ENCODE measurements at regions of chr14 and their contacts with region 1.

Region 1: GRCh38 chr14:77124345-77125280 is 17.0 kb downstream of the ZDHHC22 start:
- DNase-seq: no peak
- ATAC-seq: peak; percentile 50
- H3K4me3 ChIP-seq: peak overlapping the region; percentile 48; the same call in 1 of the 2 replicates
- H3K27ac ChIP-seq: peak overlapping the region; percentile 4; the same call in 1 of the 2 replicates
- H3K4me1 ChIP-seq: peaks cover 49% of the 10 kb centered on the region
- H3K27me3 ChIP-seq: peaks cover 6 to 7% of the 10 kb centered on the region in 2 experiments; a peak in 2 of 4 replicates
- CTCF ChIP-seq: peak; percentile 33 to 61 (median 52); a peak in 4 of 6 replicates
- EP300 ChIP-seq: no peak
- POLR2A ChIP-seq: peak; percentile 45; the same call in 1 of the 2 replicates
- RAD21 ChIP-seq: peak; percentile 59; the same call in 1 of the 2 replicates

Region 2: DNA sequence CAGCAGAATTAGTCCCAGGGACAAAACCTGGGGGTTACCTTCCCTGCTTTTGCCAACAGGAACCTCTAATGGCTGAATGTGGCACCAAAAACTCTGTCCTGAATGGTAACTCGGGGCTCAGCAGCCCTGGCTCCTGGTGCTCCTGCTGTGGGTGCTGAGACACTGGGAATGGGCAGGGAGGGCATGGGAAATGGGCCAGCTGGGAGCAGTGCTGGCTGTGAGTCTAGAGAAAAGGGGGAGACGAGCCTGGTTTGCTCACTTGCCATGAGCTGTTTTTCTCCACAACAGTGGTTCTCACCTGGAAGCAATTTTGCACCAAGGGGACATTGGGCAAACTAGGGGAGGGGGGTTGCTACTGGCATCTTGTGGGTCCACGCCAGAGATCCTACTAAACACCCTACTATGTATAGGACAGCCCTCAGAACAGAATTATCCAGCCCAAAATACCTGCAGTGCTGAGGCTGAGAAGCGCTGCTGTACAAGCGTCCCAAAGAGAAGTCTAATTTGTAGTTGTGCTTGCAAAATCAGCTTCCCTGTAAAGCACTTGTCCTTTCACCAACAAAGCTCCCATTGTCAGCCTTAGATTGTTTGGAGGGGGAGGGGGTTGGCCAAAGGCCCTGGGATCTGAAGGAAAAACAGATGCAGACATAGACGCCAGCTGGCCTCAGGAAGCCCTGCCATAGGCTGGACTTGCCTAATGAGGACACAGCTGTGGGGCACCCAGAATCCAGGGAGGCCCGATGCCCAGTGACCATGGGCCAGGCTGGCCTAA is 294.8 kb before region 1 on chr14:
- CTCF ChIA-PET with region 1: no interaction called
- POLR2A ChIA-PET with region 1: no interaction called
- RAD21 ChIA-PET with region 1: no interaction called
- SMC1A ChIA-PET with region 1: no interaction called
- in situ Hi-C with region 1: no loop called
- intact Hi-C with region 1: no loop called
- DNase-seq: no peak
- ATAC-seq: no peak
- H3K4me3 ChIP-seq: no peak overlapping the region
- H3K27ac ChIP-seq: no peak overlapping the region
- H3K4me1 ChIP-seq: no peaks in the 10 kb centered on the region
- H3K27me3 ChIP-seq: peaks cover 0 to 3% of the 10 kb centered on the region in 2 experiments; a peak in 1 of 4 replicates
- CTCF ChIP-seq: no peak
- EP300 ChIP-seq: no peak
- POLR2A ChIP-seq: no peak
- RAD21 ChIP-seq: no peak

Region 3: DNA sequence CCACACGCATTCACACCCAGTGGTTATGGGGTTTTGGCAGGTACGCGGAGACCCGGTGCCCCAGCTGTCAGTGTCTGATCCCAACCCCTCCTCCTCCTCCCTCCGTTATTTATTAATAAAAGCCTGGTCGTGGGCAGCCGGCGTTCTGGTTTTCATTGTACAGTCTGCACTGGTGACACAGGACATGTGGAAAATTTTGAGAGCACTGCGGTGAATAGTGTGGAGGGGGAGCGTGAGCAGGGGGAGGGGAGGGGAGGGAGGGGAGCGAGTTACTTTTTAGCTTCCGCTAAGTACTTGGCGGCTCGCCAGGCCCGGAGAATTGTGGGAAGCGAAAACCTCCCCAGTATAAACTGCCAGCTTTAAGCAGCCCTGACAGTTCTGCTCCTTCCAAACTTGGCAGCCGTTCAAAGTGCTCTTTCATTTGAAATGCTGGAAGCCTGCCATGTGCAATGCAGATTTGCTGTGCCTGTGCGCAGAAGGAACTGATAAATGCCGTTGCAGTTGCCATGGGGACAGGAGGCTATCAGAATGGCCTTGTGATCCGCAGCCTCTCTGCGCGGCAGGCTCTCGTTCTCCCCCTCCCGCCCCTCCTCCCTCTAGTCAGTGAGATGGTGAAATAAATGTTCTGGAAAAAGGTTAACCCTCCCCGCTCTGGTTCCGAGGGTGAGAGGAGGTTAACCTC is 84.4 kb before region 1 on chr14:
- CTCF ChIA-PET with region 1: interaction called, 6 read pairs
- POLR2A ChIA-PET with region 1: interaction called, 4 read pairs
- RAD21 ChIA-PET with region 1: interaction called, 10 read pairs
- SMC1A ChIA-PET with region 1: interaction called, 4 read pairs
- in situ Hi-C with region 1: no loop called
- intact Hi-C with region 1: no loop called
- DNase-seq: peak; percentile 99
- ATAC-seq: peak; percentile 75
- H3K4me3 ChIP-seq: peak overlapping the region; percentile 50
- H3K27ac ChIP-seq: peak overlapping the region; percentile 93
- H3K4me1 ChIP-seq: peaks cover 87% of the 10 kb centered on the region
- H3K27me3 ChIP-seq: no peaks in the 10 kb centered on the region
- CTCF ChIP-seq: no peak
- EP300 ChIP-seq: peak; percentile 42 to 61
- POLR2A ChIP-seq: peak; percentile 55; the same call in 1 of the 2 replicates
- RAD21 ChIP-seq: no peak

Region 4: DNA sequence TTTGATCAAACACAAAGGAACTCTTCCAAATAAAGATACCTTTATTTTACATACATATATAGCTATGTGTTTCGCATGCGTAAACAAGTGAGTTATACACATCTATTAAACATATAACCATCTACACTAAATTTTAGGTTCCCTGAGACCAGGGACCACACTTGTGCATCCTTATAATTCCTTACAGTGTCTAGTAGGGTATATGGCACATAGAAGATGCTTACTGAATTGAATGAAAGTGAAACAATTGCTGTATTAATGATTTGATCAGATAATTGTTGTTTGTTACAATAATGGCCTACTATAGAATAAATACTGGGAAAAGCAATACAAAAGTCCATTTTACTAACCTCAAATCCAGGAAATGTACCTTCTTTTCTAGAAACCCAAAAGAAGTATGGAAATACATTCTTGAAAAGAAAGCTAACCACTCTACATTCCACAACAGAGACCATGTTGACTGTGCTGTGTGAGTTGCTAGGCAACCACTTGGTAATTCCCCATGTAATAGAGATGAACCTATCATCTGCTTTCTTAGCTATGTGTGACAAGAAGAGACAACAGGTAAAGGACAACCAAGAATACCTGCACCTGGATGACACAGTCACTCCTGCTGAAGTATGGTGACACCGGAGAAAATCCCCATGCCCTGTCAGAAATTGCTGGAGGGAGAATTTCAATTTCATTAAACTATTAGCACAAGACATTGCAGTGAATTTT is 38.4 kb before region 1 on chr14:
- CTCF ChIA-PET with region 1: interaction called, 445 read pairs
- POLR2A ChIA-PET with region 1: interaction called, 5 read pairs
- RAD21 ChIA-PET with region 1: interaction called, 13 read pairs
- SMC1A ChIA-PET with region 1: interaction called, 428 read pairs
- in situ Hi-C with region 1: no loop called
- intact Hi-C with region 1: loop called (anchors 1 kb)
- DNase-seq: no peak
- ATAC-seq: peak; percentile 82
- H3K4me3 ChIP-seq: no peak overlapping the region
- H3K27ac ChIP-seq: no peak overlapping the region
- H3K4me1 ChIP-seq: peaks cover 21% of the 10 kb centered on the region
- H3K27me3 ChIP-seq: no peaks in the 10 kb centered on the region; a peak in 1 of 4 replicates
- CTCF ChIP-seq: no peak
- EP300 ChIP-seq: no peak
- POLR2A ChIP-seq: no peak
- RAD21 ChIP-seq: no peak

Region 5: GRCh38 chr14:77097700-77098528 is 26.7 kb before region 1 on chr14 and contains the start of gene CIPC:
- CTCF ChIA-PET with region 1: interaction called, 445 read pairs
- POLR2A ChIA-PET with region 1: interaction called, 68 read pairs
- RAD21 ChIA-PET with region 1: interaction called, 185 read pairs
- SMC1A ChIA-PET with region 1: interaction called, 428 read pairs
- in situ Hi-C with region 1: no loop called
- intact Hi-C with region 1: loop called (anchors 1 kb)
- DNase-seq: peak; percentile 97
- ATAC-seq: peak; percentile 90
- H3K4me3 ChIP-seq: peak within 1 kb of the TSS; percentile 83
- H3K27ac ChIP-seq: peak within 1 kb of the TSS; percentile 87
- H3K4me1 ChIP-seq: peaks cover 17% of the 10 kb centered on the region
- H3K27me3 ChIP-seq: no peaks in the 10 kb centered on the region
- CTCF ChIP-seq: peak in 1 of 3 experiments; percentile 7; a peak in 1 of 6 replicates
- EP300 ChIP-seq: peak in 1 of 2 experiments; percentile 78; a peak in 2 of 4 replicates
- POLR2A ChIP-seq: peak; percentile 86
- RAD21 ChIP-seq: no peak
- polyA plus RNA-seq, gene CIPC: 5.6 to 6.6 TPM

Region 6: DNA sequence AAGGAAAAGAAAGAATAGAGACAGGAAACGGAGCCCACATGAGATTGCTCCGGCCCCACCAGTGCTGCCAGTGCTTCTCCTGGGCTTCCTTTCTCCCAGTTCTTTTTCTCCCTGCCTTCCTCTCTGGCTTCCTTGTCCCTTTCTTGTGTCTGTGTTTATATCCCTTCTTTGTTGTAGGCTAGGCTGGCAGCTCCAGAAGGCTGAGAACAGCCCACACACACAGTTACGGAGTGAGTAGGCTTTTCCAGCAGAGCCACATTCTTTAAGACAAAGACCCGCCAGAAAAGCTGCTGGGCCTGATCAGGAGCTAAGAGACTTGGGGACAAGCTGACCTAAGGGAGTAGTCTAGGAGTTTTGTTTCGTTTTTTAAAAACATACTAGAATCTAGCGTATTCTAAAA is 13.6 kb before region 1 on chr14:
- CTCF ChIA-PET with region 1: interaction called, 445 read pairs
- POLR2A ChIA-PET with region 1: interaction called, 5 read pairs
- RAD21 ChIA-PET with region 1: interaction called, 185 read pairs
- SMC1A ChIA-PET with region 1: interaction called, 428 read pairs
- in situ Hi-C with region 1: no loop called
- intact Hi-C with region 1: no loop called
- DNase-seq: no peak
- ATAC-seq: no peak
- H3K4me3 ChIP-seq: no peak overlapping the region
- H3K27ac ChIP-seq: no peak overlapping the region
- H3K4me1 ChIP-seq: no peaks in the 10 kb centered on the region
- H3K27me3 ChIP-seq: no peaks in the 10 kb centered on the region
- CTCF ChIP-seq: no peak
- EP300 ChIP-seq: no peak
- POLR2A ChIP-seq: no peak
- RAD21 ChIP-seq: no peak